GM12878 (cell line): ENCODE measurements at regions of chr13 and their contacts with region 1.

Region 1: GRCh38 chr13:77318741-77319140 is 8.2 kb downstream of the MYCBP2 start:
- DNase-seq: no peak
- ATAC-seq: no peak; the same call in 2 of the 3 replicates
- H3K4me3 ChIP-seq: no peak overlapping the region
- H3K27ac ChIP-seq: no peak overlapping the region
- H3K4me1 ChIP-seq: 0 out of 2 replicates have a peak, but pooled peaks cover 3% of the 10 kb centered on the region
- H3K27me3 ChIP-seq: no peaks in the 10 kb centered on the region
- CTCF ChIP-seq: no peak
- EP300 ChIP-seq: no peak
- POLR2A ChIP-seq: no peak
- RAD21 ChIP-seq: no peak

Region 2: GRCh38 chr13:77265336-77265735 is 53.4 kb before region 1 on chr13:
- CTCF ChIA-PET with region 1: interaction called, 4 read pairs
- POLR2A ChIA-PET with region 1: no interaction called
- RAD21 ChIA-PET with region 1: no interaction called
- SMC1A ChIA-PET with region 1: interaction called, 10 read pairs
- in situ Hi-C with region 1: no loop called
- intact Hi-C with region 1: no loop called
- DNase-seq: no peak
- ATAC-seq: no peak
- H3K4me3 ChIP-seq: no peak overlapping the region
- H3K27ac ChIP-seq: no peak overlapping the region
- H3K4me1 ChIP-seq: no peaks in the 10 kb centered on the region
- H3K27me3 ChIP-seq: no peaks in the 10 kb centered on the region
- CTCF ChIP-seq: no peak
- EP300 ChIP-seq: no peak
- POLR2A ChIP-seq: no peak
- RAD21 ChIP-seq: no peak

Region 3: GRCh38 chr13:77300176-77301037 is 18.3 kb before region 1 on chr13:
- CTCF ChIA-PET with region 1: interaction called, 22 read pairs
- POLR2A ChIA-PET with region 1: interaction called, 5 read pairs
- RAD21 ChIA-PET with region 1: interaction called, 42 read pairs
- SMC1A ChIA-PET with region 1: interaction called, 67 read pairs
- in situ Hi-C with region 1: no loop called
- intact Hi-C with region 1: no loop called
- DNase-seq: no peak
- ATAC-seq: peak; percentile 52
- H3K4me3 ChIP-seq: peak overlapping the region; percentile 30; the same call in 1 of the 2 replicates
- H3K27ac ChIP-seq: peak overlapping the region; percentile 80
- H3K4me1 ChIP-seq: peaks cover 28% of the 10 kb centered on the region
- H3K27me3 ChIP-seq: no peaks in the 10 kb centered on the region
- CTCF ChIP-seq: no peak
- EP300 ChIP-seq: no peak
- POLR2A ChIP-seq: no peak
- RAD21 ChIP-seq: no peak

Region 4: DNA sequence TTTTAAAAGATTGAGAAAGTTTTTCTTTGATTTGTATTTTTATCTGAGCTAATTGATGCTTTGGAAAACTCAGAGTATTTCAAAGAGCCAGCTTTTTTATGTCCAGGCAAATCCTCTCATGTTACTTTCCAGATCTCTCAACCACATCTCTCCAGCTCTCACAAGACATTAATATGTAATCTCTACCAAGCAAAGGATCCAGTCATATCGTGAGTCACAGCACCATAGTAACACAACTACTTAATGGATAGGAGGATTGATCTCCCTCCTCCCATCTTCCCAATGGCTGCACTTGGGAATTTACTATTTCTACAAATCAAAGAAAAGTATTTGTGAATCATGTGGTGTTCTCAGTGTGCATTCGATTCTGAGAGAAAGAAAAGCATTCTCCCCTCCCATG is 1221.3 kb after region 1 on chr13:
- CTCF ChIA-PET with region 1: no interaction called
- POLR2A ChIA-PET with region 1: no interaction called
- RAD21 ChIA-PET with region 1: no interaction called
- SMC1A ChIA-PET with region 1: no interaction called
- in situ Hi-C with region 1: no loop called
- intact Hi-C with region 1: no loop called
- DNase-seq: no peak
- ATAC-seq: no peak
- H3K4me3 ChIP-seq: no peak overlapping the region
- H3K27ac ChIP-seq: no peak overlapping the region
- H3K4me1 ChIP-seq: no peaks in the 10 kb centered on the region
- H3K27me3 ChIP-seq: no peaks in the 10 kb centered on the region
- CTCF ChIP-seq: no peak
- EP300 ChIP-seq: no peak
- POLR2A ChIP-seq: no peak
- RAD21 ChIP-seq: no peak